Activated CD4-positive, alpha-beta T cell treated with anti-CD3 and anti-CD28 coated beads, Interleukin-2, amount 10 ng/mL, durations not matched to agents 24 days and 14 days (primary cell): ENCODE measurements at regions of chr3 and their contacts with region 1.

Region 1: GRCh38 chr3:122014741-122015140 is 7.3 kb downstream of the ILDR1 start:
- DNase-seq: no peak
- H3K4me3 Mint-ChIP-seq: no peak overlapping the region
- H3K27ac Mint-ChIP-seq: no peak overlapping the region
- H3K4me1 Mint-ChIP-seq: peaks cover 21% of the 10 kb centered on the region
- H3K27me3 Mint-ChIP-seq: peaks cover 19% of the 10 kb centered on the region

Region 2: DNA sequence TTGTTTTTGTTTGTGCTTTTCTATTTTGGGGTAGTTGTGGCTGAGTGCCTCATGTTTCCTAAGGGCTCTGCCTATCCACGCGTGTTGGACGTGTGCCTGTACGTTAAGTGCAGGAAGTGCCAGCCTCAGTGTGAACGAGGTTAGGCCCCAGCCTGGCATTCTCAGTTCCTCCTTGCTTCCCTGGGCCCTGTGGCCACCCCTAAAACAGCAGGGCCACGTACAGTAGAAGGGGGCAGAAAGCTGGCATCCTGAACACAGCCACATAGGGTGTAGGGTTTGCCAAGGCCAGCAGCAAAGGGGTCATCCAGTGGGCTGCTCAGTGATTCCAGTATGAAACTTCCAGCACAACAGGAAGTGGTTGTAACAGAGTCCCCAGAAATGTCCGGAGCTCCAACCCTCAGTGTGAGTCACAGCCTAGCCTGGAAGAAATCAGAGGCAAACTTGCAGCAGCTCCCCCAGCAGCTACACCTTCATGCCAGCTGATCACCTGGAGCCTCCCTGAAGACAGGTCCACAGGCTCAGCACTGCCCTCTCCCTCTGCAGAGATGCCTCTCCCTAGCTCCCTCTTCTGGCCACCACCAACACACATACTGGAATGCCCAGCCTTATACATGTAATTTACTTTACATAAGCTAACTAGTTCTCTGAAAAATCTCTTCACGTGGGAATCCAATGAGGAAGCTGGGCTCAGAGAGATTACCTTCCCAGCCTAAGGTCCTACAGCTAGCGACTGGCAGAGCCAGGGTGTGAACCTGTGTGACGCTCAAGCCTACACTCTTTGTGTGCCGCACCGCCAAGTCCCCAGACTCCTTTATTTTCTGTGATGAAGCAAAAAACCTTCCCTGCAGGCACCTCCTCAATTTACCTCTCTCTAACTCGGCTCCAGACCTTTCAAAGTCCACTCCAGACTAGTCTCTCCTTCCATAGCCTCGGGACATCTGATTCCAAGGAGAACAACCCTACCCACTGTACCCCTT is 19.3 kb before region 1 on chr3:
- intact Hi-C with region 1: loop called (anchors 2 kb)
- DNase-seq: peak; percentile 70
- H3K4me3 Mint-ChIP-seq: no peak overlapping the region
- H3K27ac Mint-ChIP-seq: peak overlapping the region; percentile 68
- H3K4me1 Mint-ChIP-seq: peaks cover 26% of the 10 kb centered on the region
- H3K27me3 Mint-ChIP-seq: no peaks in the 10 kb centered on the region

Region 3: GRCh38 chr3:122030381-122031122 is 15.8 kb after region 1 on chr3:
- intact Hi-C with region 1: loop called (anchors 2 kb)
- DNase-seq: peak; percentile 77
- H3K4me3 Mint-ChIP-seq: peak overlapping the region; percentile 20
- H3K27ac Mint-ChIP-seq: peak overlapping the region; percentile 87
- H3K4me1 Mint-ChIP-seq: peaks cover 13% of the 10 kb centered on the region
- H3K27me3 Mint-ChIP-seq: peaks cover 3% of the 10 kb centered on the region

Region 4: DNA sequence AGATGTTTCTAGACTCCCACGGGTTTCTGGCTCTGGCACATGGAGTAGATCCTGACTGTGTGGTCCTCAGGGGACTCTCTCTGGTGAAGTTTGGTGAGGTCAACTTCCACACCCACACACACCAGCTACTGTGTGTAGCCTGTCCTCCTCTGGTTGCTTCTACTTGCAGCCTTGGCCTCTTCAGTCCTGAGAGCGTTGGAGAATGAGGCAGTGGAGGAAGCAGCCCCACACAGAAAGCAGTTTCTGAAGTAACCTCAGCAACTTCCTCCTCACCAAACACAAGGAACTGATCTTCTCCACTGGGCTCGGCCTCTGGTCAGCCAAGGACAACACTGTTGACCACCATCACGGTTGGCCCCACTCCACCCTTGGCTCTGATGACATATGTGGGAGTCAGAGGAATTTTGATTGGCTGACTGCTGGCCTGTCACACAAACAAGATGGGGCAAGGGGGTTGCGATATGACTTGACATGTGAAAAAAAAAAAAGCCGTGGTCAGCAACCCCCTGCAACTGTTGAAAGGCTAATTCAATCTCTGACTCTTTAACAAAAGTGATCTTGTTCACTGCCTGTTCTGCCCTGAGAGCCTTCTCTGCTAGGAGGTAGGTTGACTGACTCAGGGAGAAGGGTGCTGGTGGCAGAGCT is 60.0 kb after region 1 on chr3:
- intact Hi-C with region 1: loop called (anchors 2 kb)
- DNase-seq: peak; percentile 78
- H3K4me3 Mint-ChIP-seq: peak overlapping the region; percentile 53
- H3K27ac Mint-ChIP-seq: peak overlapping the region; percentile 76
- H3K4me1 Mint-ChIP-seq: peaks cover 35% of the 10 kb centered on the region
- H3K27me3 Mint-ChIP-seq: no peaks in the 10 kb centered on the region